ENCODE measurements at regions of chr17 and their contacts with region 1.

Region 1: DNA sequence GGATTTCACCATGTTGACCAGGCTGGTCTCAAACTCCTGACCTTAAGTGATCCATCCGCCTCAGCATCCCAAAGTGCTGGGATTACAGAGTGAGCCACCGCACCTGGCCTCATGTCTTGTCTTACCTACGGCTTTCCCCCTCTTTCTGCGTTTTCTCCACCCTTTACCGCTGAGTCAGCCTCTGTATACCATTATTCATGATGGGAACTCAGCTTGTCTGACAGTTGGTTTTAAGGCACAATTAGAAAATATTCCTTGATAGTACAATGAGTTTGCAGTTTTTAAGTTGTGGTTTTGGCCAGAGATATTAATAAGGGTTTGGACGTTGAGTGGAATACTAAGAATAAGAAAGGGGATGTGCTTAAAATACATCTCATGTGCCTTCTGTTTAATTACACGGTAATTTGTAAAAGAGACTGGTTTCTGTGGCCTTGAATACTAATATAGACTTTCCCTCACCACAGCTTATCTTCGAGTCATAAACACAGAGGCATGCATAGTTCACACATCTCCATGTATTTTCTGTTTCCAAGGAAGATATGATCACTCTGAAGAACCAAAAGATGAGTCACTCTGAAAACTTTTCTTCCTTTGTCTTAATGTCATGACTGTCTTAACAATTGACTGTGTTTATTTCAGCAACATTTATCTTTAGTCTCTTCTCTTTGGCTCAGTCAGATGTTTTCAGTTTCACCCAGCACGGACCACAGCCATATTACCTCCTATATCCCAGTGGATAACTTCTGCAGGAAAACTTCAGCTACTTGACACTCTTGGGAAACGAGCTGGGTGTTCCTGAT is 54.4 kb downstream of the PITPNC1 start:
- DNase-seq: peak in 3 of 14 experiments; percentile 41 to 56 (median 45)
- ATAC-seq: peak; percentile 5
- H3K4me3 ChIP-seq: no peak overlapping the region
- H3K4me3 Mint-ChIP-seq: peak overlapping the region; percentile 8
- H3K27ac ChIP-seq: no peak overlapping the region
- H3K27ac Mint-ChIP-seq: peak overlapping the region; percentile 91
- H3K4me1 ChIP-seq: peaks cover 59% of the 10 kb centered on the region
- H3K4me1 Mint-ChIP-seq: peaks cover 82% of the 10 kb centered on the region
- H3K27me3 ChIP-seq: no peaks in the 10 kb centered on the region
- H3K27me3 Mint-ChIP-seq: no peaks in the 10 kb centered on the region
- CTCF ChIP-seq: no peak

Region 2: GRCh38 chr17:67390646-67391384 is 40.6 kb before region 1 on chr17:
- CTCF ChIA-PET with region 1: interaction called, 3 read pairs
- POLR2A ChIA-PET with region 1: interaction called, 19 read pairs
- intact Hi-C with region 1: no loop called
- DNase-seq: peak; percentile 39 to 83 (median 60)
- ATAC-seq: peak; percentile 82
- H3K4me3 ChIP-seq: peak overlapping the region; percentile 20
- H3K4me3 Mint-ChIP-seq: peak overlapping the region; percentile 86
- H3K27ac ChIP-seq: peak overlapping the region; percentile 50 to 55
- H3K27ac Mint-ChIP-seq: peak overlapping the region; percentile 92
- H3K4me1 ChIP-seq: peaks cover 56% of the 10 kb centered on the region
- H3K4me1 Mint-ChIP-seq: peaks cover 78% of the 10 kb centered on the region
- H3K27me3 ChIP-seq: no peaks in the 10 kb centered on the region
- H3K27me3 Mint-ChIP-seq: no peaks in the 10 kb centered on the region
- CTCF ChIP-seq: no peak

Region 3: GRCh38 chr17:67400193-67400592 is 31.3 kb before region 1 on chr17:
- CTCF ChIA-PET with region 1: interaction called, 3 read pairs
- POLR2A ChIA-PET with region 1: interaction called, 5 read pairs
- intact Hi-C with region 1: loop called in 1 of 2 experiments (anchors 5 kb)
- DNase-seq: peak in 4 of 14 experiments; percentile 34 to 72 (median 60)
- ATAC-seq: peak; percentile 50
- H3K4me3 ChIP-seq: no peak overlapping the region
- H3K4me3 Mint-ChIP-seq: peak overlapping the region; percentile 65
- H3K27ac ChIP-seq: peak overlapping the region; percentile 31 to 77
- H3K27ac Mint-ChIP-seq: peak overlapping the region; percentile 99
- H3K4me1 ChIP-seq: peaks cover 52% of the 10 kb centered on the region
- H3K4me1 Mint-ChIP-seq: peaks cover 77% of the 10 kb centered on the region
- H3K27me3 ChIP-seq: no peaks in the 10 kb centered on the region
- H3K27me3 Mint-ChIP-seq: no peaks in the 10 kb centered on the region
- CTCF ChIP-seq: no peak

Region 4: GRCh38 chr17:67415291-67415690 is 16.2 kb before region 1 on chr17:
- CTCF ChIA-PET with region 1: no interaction called
- POLR2A ChIA-PET with region 1: no interaction called
- intact Hi-C with region 1: no loop called
- DNase-seq: no peak
- ATAC-seq: no peak
- H3K4me3 ChIP-seq: no peak overlapping the region
- H3K4me3 Mint-ChIP-seq: no peak overlapping the region
- H3K27ac ChIP-seq: no peak overlapping the region
- H3K27ac Mint-ChIP-seq: peak overlapping the region; percentile 16
- H3K4me1 ChIP-seq: peaks cover 55% of the 10 kb centered on the region
- H3K4me1 Mint-ChIP-seq: peaks cover 80% of the 10 kb centered on the region
- H3K27me3 ChIP-seq: no peaks in the 10 kb centered on the region
- H3K27me3 Mint-ChIP-seq: no peaks in the 10 kb centered on the region
- CTCF ChIP-seq: no peak

Region 5: DNA sequence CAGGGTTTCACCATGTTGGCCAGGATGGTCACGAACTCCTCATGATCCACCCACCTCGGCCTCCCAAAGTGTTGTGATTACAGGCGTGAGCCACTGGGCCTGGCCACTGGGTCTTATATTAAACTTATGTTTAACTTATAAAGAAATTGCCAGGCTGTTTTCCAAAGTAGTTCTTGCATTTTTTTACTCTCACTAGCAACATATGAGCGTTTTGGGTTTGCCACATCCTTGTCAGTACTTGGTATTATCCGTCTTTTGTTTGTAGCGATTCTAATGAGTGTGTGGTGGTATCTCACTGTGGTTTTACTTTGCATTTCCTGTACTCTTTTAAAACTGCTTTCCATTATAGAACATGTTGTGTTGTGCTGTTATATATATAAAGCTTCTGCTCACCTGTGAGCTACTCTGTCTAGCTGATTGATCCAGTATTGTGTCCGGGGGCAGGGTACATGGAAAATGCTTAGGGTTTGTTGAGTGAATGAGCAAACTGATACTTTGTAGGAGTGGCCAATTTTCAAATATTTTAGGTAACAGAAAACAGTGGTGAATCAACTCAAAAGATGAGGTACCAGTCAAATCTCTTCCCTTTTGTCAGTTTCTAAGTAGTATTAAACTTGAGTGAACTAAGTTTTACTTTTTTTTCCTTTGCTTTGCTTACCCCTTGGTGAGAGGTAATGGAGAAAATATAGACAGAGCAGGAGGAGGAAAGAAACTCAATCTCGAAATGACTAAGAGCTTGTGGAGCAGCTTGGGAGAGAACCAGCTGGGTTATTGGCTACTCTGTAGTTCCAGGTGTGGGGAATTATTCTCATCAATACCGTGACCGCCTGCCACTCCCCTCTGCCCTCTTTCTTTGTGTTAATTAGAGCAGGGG is 21.5 kb after region 1 on chr17:
- CTCF ChIA-PET with region 1: no interaction called
- POLR2A ChIA-PET with region 1: interaction called, 66 read pairs
- intact Hi-C with region 1: loop called in 1 of 2 experiments (anchors 2 kb)
- DNase-seq: peak in 3 of 14 experiments; percentile 74 to 91 (median 76)
- ATAC-seq: peak; percentile 90
- H3K4me3 ChIP-seq: peak overlapping the region; percentile 9
- H3K4me3 Mint-ChIP-seq: peak overlapping the region; percentile 85
- H3K27ac ChIP-seq: peak overlapping the region; percentile 20 to 71
- H3K27ac Mint-ChIP-seq: peak overlapping the region; percentile 91
- H3K4me1 ChIP-seq: peaks cover 81% of the 10 kb centered on the region
- H3K4me1 Mint-ChIP-seq: peaks cover 95% of the 10 kb centered on the region
- H3K27me3 ChIP-seq: no peaks in the 10 kb centered on the region
- H3K27me3 Mint-ChIP-seq: no peaks in the 10 kb centered on the region
- CTCF ChIP-seq: no peak

Measured in CD4-positive, alpha-beta T cell (primary cell).